ENCODE measurements at regions of chr2 and their contacts with region 1.

Region 1: DNA sequence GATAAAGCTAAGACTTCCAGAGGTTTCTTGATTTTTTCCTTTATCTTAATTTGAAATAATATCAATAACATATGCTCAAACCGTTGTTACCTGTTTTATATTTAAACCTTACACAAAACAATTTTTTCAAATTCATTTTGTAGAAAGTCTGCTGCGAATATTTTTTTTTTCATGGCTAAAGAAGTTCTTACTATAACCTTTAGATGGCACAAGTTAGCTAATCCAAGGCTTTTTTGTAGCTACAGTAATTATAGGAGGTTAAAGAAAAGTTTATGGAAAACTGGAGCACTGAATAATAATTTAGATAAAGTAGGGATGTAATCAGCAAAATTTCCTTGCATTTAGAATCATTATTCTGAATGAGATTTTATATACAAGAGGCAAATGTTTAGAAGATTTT is 78.0 kb upstream of the PNPT1 start:
- H3K4me3 ChIP-seq: no peak overlapping the region
- H3K27ac ChIP-seq: no peak overlapping the region
- H3K4me1 ChIP-seq: no peaks in the 10 kb centered on the region
- CTCF ChIP-seq: peak; percentile 51

Region 2: DNA sequence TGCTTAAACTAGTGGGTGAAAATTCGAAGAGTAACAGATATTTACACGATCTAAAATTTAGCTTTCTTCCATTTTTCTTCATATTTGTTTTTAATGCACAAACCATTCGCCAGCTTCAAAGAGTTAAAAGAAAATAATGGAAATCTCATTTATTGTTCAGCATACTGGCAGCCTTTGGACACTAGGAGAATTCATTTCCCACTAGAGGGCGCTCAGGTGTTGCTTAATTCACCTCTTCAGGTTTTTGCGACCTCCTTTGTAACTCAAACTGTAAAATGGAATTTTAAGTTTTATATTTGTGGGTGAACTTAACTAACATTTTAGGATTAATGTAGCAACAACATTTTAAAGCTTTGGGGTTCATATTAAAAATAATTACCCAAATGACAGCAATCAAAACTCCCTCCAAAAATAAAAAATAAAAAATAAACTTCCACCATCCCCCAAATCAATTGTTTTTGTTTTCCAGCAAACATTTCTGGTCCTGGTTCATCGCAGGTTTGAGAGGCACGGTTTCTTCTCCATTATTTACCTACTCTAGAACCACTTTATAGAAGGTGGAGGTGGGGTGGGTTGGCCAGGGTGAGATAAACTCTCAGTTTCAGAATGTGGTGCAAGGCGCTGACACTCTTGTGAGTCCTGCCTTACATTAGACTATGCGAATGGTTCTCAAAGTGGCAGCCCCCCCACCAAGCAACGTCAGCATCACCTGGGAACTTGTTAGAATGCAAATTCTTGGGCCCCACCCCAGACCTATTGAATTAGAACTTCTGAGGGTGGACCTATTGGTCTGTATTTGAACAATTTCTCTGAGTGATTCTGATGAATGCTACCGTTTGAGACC is 53.2 kb before region 1 on chr2:
- CTCF ChIA-PET with region 1: interaction called, 27 read pairs
- POLR2A ChIA-PET with region 1: no interaction called
- H3K4me3 ChIP-seq: no peak overlapping the region
- H3K27ac ChIP-seq: no peak overlapping the region
- H3K4me1 ChIP-seq: no peaks in the 10 kb centered on the region
- CTCF ChIP-seq: 0 out of 2 replicates have a peak, but pooled peaks have one; percentile 16

Region 3: GRCh38 chr2:56009758-56010458 is 238.3 kb after region 1 on chr2:
- CTCF ChIA-PET with region 1: interaction called, 27 read pairs
- POLR2A ChIA-PET with region 1: no interaction called
- H3K4me3 ChIP-seq: no peak overlapping the region
- H3K27ac ChIP-seq: no peak overlapping the region
- H3K4me1 ChIP-seq: no peaks in the 10 kb centered on the region
- CTCF ChIP-seq: no peak

Measured in HEK293 (cell line).